CD14-positive monocyte (primary cell): ENCODE measurements at regions of chr5 and their contacts with region 1.

Region 1: DNA sequence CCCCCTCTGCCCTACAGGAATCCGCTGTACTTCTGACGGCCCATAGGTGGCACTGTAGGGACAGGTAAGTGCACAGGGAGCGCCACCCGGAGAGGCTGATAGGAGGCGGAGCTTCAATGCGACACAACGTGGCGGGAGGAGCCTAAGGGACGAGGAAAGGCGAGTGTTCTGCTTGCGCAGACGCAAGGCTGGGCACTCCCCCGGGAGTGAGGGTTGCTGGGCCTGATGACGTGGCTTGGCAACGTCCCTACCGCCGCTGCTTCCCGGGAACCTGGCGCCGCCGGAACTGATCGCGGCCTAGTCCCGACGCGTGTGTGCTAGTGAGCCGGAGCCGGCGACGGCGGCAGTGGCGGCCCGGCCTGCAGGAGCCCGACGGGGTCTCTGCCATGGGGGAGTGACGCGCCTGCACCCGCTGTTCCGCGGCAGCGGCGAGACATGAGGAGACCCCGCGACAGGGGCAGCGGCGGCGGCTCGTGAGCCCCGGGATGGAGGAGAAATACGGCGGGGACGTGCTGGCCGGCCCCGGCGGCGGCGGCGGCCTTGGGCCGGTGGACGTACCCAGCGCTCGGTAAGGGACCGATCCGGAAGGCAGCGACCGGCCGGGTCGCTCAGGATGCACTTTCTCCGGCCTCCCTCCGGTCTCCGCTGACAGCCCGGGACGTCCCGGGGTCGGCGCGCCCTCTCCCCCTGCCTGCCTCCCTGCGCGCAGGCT is at the start of gene SLC30A5:
- DNase-seq: peak; percentile 99 to 100 (median 100)
- H3K4me3 ChIP-seq: peak within 1 kb of the TSS; percentile 62 to 88 (median 81)
- H3K4me3 Mint-ChIP-seq: peak within 1 kb of the TSS; percentile 86 to 87
- H3K27ac ChIP-seq: peak within 1 kb of the TSS; percentile 79 to 88
- H3K27ac Mint-ChIP-seq: peak within 1 kb of the TSS; percentile 92 to 97 (median 95)
- H3K4me1 ChIP-seq: peaks cover 12 to 16% of the 10 kb centered on the region in 2 donors
- H3K4me1 Mint-ChIP-seq: peaks cover 9% of the 10 kb centered on the region
- H3K27me3 ChIP-seq: no peaks in the 10 kb centered on the region
- H3K27me3 Mint-ChIP-seq: peaks cover 0 to 2% (median 2%) of the 10 kb centered on the region in 3 donors
- CTCF ChIP-seq: peak; percentile 82
- polyA plus RNA-seq, gene SLC30A5: 12.6 to 28.2 (median 27.0) TPM

Region 2: GRCh38 chr5:69024241-69024651 is 69.7 kb before region 1 on chr5:
- intact Hi-C with region 1: no loop called
- DNase-seq: peak in 1 of 3 donors; percentile 6
- H3K4me3 ChIP-seq: no peak overlapping the region
- H3K4me3 Mint-ChIP-seq: no peak overlapping the region
- H3K27ac ChIP-seq: no peak overlapping the region
- H3K27ac Mint-ChIP-seq: no peak overlapping the region
- H3K4me1 ChIP-seq: no peaks in the 10 kb centered on the region
- H3K4me1 Mint-ChIP-seq: no peaks in the 10 kb centered on the region
- H3K27me3 ChIP-seq: no peaks in the 10 kb centered on the region
- H3K27me3 Mint-ChIP-seq: peaks cover 0 to 2% (median 0%) of the 10 kb centered on the region in 3 donors
- CTCF ChIP-seq: peak; percentile 63

Region 3: DNA sequence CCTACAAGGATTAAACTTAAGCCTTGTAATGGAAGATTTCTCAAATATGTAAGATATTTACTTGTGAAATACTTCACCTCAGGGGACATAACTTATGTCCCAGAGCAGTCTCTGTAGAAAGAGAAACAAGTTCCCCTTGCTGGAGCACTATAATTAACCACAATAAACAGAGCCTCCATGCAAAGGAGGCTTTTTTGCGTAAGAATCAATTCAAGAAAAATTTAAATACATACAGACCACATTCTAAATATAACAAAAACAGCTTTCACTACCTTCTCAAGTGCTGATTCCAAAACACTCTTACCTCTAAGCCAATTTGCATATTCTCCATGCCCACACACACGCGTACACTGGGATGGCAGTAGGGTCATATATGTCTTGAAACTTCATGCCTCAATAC is 42.4 kb after region 1 on chr5:
- intact Hi-C with region 1: no loop called
- DNase-seq: no peak
- H3K4me3 ChIP-seq: no peak overlapping the region
- H3K4me3 Mint-ChIP-seq: no peak overlapping the region
- H3K27ac ChIP-seq: no peak overlapping the region
- H3K27ac Mint-ChIP-seq: no peak overlapping the region
- H3K4me1 ChIP-seq: no peaks in the 10 kb centered on the region
- H3K4me1 Mint-ChIP-seq: peaks cover 5% of the 10 kb centered on the region
- H3K27me3 ChIP-seq: no peaks in the 10 kb centered on the region
- H3K27me3 Mint-ChIP-seq: no peaks in the 10 kb centered on the region
- CTCF ChIP-seq: no peak

Region 4: DNA sequence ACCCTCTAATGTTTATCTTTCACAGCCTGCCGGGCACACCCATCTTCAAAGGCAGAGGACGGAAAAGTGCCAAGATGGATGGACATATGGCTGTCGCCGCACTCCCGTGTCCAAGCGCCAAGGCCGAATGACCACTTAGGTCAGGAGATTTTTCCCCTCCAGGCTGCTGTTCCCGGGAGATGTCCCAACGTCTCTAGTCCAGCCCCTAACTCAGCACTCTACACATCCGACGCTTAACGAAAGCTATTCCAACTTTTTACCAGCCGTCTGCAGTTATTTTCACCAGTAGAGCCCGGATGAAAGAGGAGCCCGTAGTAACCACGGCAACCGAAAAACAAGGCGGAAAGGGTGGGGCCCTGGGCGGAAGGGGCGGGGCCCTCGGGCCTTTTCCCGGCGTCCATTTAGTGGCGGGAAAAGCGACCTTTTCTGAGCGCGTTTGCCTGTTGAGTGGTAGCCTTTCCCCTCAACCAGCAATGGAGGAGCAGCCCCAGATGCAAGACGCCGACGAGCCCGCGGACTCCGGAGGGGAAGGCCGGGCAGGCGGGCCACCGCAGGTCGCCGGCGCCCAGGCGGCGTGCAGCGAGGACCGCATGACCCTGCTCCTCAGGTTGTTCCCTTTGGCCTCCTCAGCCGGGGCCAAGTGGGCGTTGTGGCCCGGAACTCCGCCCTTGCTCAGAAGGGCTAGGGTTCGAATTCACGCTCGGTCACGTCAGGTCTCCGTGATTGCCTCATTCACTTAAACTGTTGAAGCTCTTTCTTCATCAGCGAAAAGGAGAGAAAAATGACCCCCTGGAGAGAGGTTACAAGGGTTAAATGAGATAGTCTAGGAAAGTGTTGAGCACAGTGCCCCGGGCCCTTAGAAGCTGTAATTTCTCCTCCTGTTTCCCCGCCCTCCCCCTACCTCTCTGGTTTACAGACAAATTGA is 95.5 kb after region 1 on chr5 and contains the start of gene CENPH:
- intact Hi-C with region 1: no loop called
- DNase-seq: peak; percentile 78 to 81 (median 79)
- H3K4me3 ChIP-seq: peak within 1 kb of the TSS; percentile 84 to 99 (median 88)
- H3K4me3 Mint-ChIP-seq: peak within 1 kb of the TSS; percentile 93 to 97
- H3K27ac ChIP-seq: peak within 1 kb of the TSS; percentile 57 to 89
- H3K27ac Mint-ChIP-seq: peak within 1 kb of the TSS; percentile 88 to 97 (median 95)
- H3K4me1 ChIP-seq: peaks cover 12 to 17% of the 10 kb centered on the region in 2 donors
- H3K4me1 Mint-ChIP-seq: peaks cover 14% of the 10 kb centered on the region
- H3K27me3 ChIP-seq: no peaks in the 10 kb centered on the region
- H3K27me3 Mint-ChIP-seq: peaks cover 0 to 2% (median 0%) of the 10 kb centered on the region in 3 donors
- CTCF ChIP-seq: no peak
- polyA plus RNA-seq, gene CENPH: 0.57 to 0.73 (median 0.61) TPM

Region 5: GRCh38 chr5:69234457-69235268 is 140.7 kb after region 1 on chr5 and contains the start of gene CDK7:
- intact Hi-C with region 1: loop called in 1 of 2 experiments (anchors 5 kb)
- DNase-seq: peak; percentile 87 to 93 (median 90)
- H3K4me3 ChIP-seq: peak within 1 kb of the TSS; percentile 63 to 96 (median 87)
- H3K4me3 Mint-ChIP-seq: peak within 1 kb of the TSS; percentile 90 to 99
- H3K27ac ChIP-seq: peak within 1 kb of the TSS; percentile 58 to 84
- H3K27ac Mint-ChIP-seq: peak within 1 kb of the TSS; percentile 82 to 97 (median 91)
- H3K4me1 ChIP-seq: peaks cover 11 to 13% of the 10 kb centered on the region in 2 donors
- H3K4me1 Mint-ChIP-seq: peaks cover 24% of the 10 kb centered on the region
- H3K27me3 ChIP-seq: no peaks in the 10 kb centered on the region
- H3K27me3 Mint-ChIP-seq: no peaks in the 10 kb centered on the region
- CTCF ChIP-seq: no peak
- polyA plus RNA-seq, gene CDK7: 12.4 to 20.4 (median 14.4) TPM

Region 6: GRCh38 chr5:69334793-69335268 is 240.9 kb after region 1 on chr5:
- intact Hi-C with region 1: loop called in 1 of 2 experiments (anchors 10 kb)
- DNase-seq: peak; percentile 61 to 71 (median 69)
- H3K4me3 ChIP-seq: no peak overlapping the region
- H3K4me3 Mint-ChIP-seq: peak overlapping the region; percentile 2 to 26
- H3K27ac ChIP-seq: no peak overlapping the region
- H3K27ac Mint-ChIP-seq: no peak overlapping the region
- H3K4me1 ChIP-seq: peaks cover 20 to 27% of the 10 kb centered on the region in 2 donors
- H3K4me1 Mint-ChIP-seq: peaks cover 27% of the 10 kb centered on the region
- H3K27me3 ChIP-seq: no peaks in the 10 kb centered on the region
- H3K27me3 Mint-ChIP-seq: peaks cover 0 to 2% (median 1%) of the 10 kb centered on the region in 3 donors
- CTCF ChIP-seq: peak; percentile 75

Region 7: GRCh38 chr5:69369369-69370121 is 275.6 kb after region 1 on chr5 and contains the starts of genes AK6, RAD17 and TAF9:
- intact Hi-C with region 1: loop called (anchors 5 kb)
- DNase-seq: peak; percentile 83 to 89 (median 85)
- H3K4me3 ChIP-seq: peak within 1 kb of the TSS; percentile 77 to 97 (median 86)
- H3K4me3 Mint-ChIP-seq: peak within 1 kb of the TSS; percentile 96 to 97
- H3K27ac ChIP-seq: peak within 1 kb of the TSS; percentile 56 to 99
- H3K27ac Mint-ChIP-seq: peak within 1 kb of the TSS; percentile 93 to 99 (median 98)
- H3K4me1 ChIP-seq: peaks cover 18 to 26% of the 10 kb centered on the region in 2 donors
- H3K4me1 Mint-ChIP-seq: peaks cover 23% of the 10 kb centered on the region
- H3K27me3 ChIP-seq: no peaks in the 10 kb centered on the region
- H3K27me3 Mint-ChIP-seq: no peaks in the 10 kb centered on the region
- CTCF ChIP-seq: no peak
- polyA plus RNA-seq, gene AK6: 7.6 to 50.3 (median 30.6) TPM
- polyA plus RNA-seq, gene RAD17: 9.1 to 11.6 (median 9.6) TPM
- polyA plus RNA-seq, gene TAF9: 50.2 to 156 (median 143) TPM